Caco-2 (cell line): ENCODE measurements at regions of chr11 and their contacts with region 1.

Region 1: DNA sequence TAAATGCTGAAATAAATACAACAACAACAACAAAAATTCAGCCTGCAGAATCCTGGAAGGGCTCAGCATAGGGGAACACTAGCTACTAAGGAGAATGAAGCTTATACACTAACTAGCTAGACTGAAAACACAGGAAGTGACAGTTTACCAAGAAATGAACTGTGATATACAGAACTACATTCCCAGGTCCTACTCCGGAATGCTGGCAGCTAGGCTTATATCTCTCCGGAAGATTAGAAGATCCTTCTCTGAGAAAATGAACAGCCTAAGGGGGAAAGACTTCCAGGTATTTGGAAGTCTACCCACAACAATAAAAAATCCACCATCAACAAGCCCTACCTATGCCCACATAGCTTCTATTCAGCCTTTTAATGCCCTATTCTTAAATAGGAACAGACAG is 31.0 kb downstream of the CCDC34 start:
- DNase-seq: no peak
- H3K4me3 ChIP-seq: no peak overlapping the region
- H3K4me3 Mint-ChIP-seq: no peak overlapping the region
- H3K27ac Mint-ChIP-seq: peak overlapping the region; percentile 23
- H3K4me1 ChIP-seq: peaks cover 28% of the 10 kb centered on the region
- H3K4me1 Mint-ChIP-seq: peaks cover 36% of the 10 kb centered on the region
- H3K27me3 ChIP-seq: no peaks in the 10 kb centered on the region
- H3K27me3 Mint-ChIP-seq: no peaks in the 10 kb centered on the region
- CTCF ChIP-seq: no peak

Region 2: DNA sequence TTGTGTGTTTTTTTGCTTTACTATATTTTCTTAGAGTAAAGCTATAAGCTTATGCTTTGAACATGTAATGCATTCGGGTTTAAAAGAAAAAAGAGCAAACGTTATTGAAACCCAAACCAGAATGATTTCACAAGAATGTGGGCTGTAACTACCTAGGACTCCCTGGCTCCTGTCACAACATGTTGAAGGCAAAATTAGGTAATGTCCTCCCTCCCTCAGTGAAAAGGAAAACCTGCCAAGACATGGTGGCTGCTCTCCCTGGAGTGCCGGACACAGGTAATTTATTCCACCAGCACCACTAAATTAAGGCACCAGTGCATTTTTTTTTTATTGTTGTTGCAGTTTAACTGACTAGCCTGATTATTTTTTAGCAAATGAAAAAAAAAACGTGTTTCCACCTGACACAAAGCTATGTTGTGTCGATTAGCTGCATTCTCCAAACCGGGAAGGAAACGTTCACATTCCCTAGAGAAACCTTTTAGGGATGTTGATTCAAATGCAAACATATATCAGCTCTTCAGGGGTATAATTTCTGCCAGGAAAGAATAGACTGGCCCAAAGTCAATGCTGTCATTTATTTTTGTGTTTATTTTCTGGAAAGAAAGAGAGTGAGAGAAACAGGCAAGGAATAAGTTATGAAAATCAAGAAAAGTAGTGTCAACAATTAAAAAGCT is 103.6 kb before region 1 on chr11:
- CTCF ChIA-PET with region 1: no interaction called
- POLR2A ChIA-PET with region 1: no interaction called
- intact Hi-C with region 1: no loop called
- DNase-seq: no peak
- H3K4me3 ChIP-seq: no peak overlapping the region
- H3K4me3 Mint-ChIP-seq: no peak overlapping the region
- H3K27ac Mint-ChIP-seq: no peak overlapping the region
- H3K4me1 ChIP-seq: peaks cover 1% of the 10 kb centered on the region; the same call in 1 of the 2 replicates
- H3K4me1 Mint-ChIP-seq: peaks cover under 1% of the 10 kb centered on the region
- H3K27me3 ChIP-seq: no peaks in the 10 kb centered on the region
- H3K27me3 Mint-ChIP-seq: no peaks in the 10 kb centered on the region
- CTCF ChIP-seq: no peak

Region 3: DNA sequence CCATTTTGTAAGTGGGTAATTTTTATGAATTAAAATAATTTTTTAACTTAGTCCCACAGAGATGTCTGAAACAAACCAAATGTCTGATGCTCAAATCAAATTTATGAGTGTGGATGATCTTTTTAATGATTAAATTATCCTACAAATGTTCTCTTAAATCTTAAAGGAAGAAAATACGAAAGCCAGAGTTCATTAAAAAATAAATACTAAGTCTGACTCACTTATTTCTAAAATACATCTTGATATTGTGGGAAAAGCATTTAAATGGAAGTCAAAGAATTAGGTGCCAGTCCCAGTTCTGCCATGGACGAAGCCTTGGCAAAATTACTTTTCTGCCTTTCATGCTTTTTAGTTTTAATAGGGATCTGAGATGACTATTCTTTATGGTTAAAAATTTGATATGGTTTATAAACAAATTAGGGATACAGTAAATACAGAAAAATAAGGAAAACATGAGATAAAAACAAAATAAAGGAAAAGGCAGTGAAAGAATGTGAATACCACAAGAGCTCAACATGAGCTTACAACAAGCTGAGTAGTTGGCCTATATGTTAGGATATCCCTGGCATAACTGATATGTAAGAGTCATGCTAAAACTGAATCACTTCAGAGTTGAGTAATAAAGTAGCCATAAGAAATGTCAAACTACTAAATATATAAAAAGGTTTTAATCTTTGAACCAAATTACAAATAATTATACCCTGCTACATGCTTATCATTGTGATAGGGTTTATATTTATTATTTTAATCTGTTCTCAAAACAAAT is 21.8 kb after region 1 on chr11:
- CTCF ChIA-PET with region 1: no interaction called
- POLR2A ChIA-PET with region 1: no interaction called
- intact Hi-C with region 1: loop called (anchors 2 kb)
- DNase-seq: no peak
- H3K4me3 ChIP-seq: no peak overlapping the region
- H3K4me3 Mint-ChIP-seq: no peak overlapping the region
- H3K27ac Mint-ChIP-seq: peak overlapping the region; percentile 14
- H3K4me1 ChIP-seq: peaks cover 42% of the 10 kb centered on the region
- H3K4me1 Mint-ChIP-seq: peaks cover 40% of the 10 kb centered on the region
- H3K27me3 ChIP-seq: no peaks in the 10 kb centered on the region
- H3K27me3 Mint-ChIP-seq: no peaks in the 10 kb centered on the region
- CTCF ChIP-seq: no peak

Region 4: GRCh38 chr11:27571156-27571825 is 239.3 kb after region 1 on chr11:
- CTCF ChIA-PET with region 1: no interaction called
- POLR2A ChIA-PET with region 1: no interaction called
- intact Hi-C with region 1: no loop called
- DNase-seq: peak in 1 of 2 experiments; percentile 36
- H3K4me3 ChIP-seq: no peak overlapping the region
- H3K4me3 Mint-ChIP-seq: no peak overlapping the region
- H3K27ac Mint-ChIP-seq: no peak overlapping the region
- H3K4me1 ChIP-seq: no peaks in the 10 kb centered on the region
- H3K4me1 Mint-ChIP-seq: no peaks in the 10 kb centered on the region
- H3K27me3 ChIP-seq: no peaks in the 10 kb centered on the region
- H3K27me3 Mint-ChIP-seq: peaks cover 8% of the 10 kb centered on the region
- CTCF ChIP-seq: no peak